ENCODE measurements at regions of chr15 and their contacts with region 1.

Region 1: GRCh38 chr15:41989259-41989933 is 17.0 kb upstream of the EHD4 start:
- DNase-seq: peak; percentile 81 to 88 (median 85)
- ATAC-seq: peak; percentile 91 to 97 (median 96)
- H3K4me3 ChIP-seq: no peak overlapping the region
- H3K27ac ChIP-seq: no peak overlapping the region
- H3K4me1 ChIP-seq: no peaks in the 10 kb centered on the region
- H3K27me3 ChIP-seq: no peaks in the 10 kb centered on the region
- CTCF ChIP-seq: peak; percentile 97 to 99 (median 98)
- POLR2A ChIP-seq: no peak

Region 2: DNA sequence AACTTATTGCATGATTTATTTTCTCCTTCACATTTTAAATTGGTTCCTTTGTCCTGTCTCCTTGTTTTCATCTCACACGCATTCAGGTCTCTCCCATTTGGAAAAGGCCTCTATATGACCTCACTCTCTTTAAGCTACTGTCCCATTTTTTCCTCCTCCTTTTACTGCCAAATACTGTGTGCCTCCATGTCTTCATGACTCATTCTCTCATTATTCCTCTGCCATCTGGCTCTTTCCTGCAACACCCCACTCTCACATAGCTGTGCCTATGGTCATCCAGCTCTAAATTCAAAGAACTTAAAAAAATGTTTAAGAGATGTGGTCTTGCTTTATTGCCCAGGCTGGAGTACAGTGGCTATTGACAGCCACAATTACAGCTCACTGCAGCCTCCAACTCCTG is 382.4 kb before region 1 on chr15:
- intact Hi-C with region 1: no loop called
- DNase-seq: no peak
- ATAC-seq: no peak
- H3K4me3 ChIP-seq: no peak overlapping the region
- H3K27ac ChIP-seq: no peak overlapping the region
- H3K4me1 ChIP-seq: no peaks in the 10 kb centered on the region
- H3K27me3 ChIP-seq: no peaks in the 10 kb centered on the region
- CTCF ChIP-seq: no peak
- POLR2A ChIP-seq: no peak

Region 3: GRCh38 chr15:42056934-42057779 is 67.8 kb after region 1 on chr15:
- intact Hi-C with region 1: loop called in 1 of 2 experiments (anchors 5 kb)
- DNase-seq: peak; percentile 64 to 83 (median 74)
- ATAC-seq: peak; percentile 70 to 83 (median 77)
- H3K4me3 ChIP-seq: peak overlapping the region in 1 of 3 donors; percentile 14
- H3K27ac ChIP-seq: peak overlapping the region in 2 of 3 donors; percentile 33 to 36
- H3K4me1 ChIP-seq: peaks cover 0 to 25% (median 0%) of the 10 kb centered on the region in 4 donors
- H3K27me3 ChIP-seq: no peaks in the 10 kb centered on the region
- CTCF ChIP-seq: peak; percentile 36 to 67 (median 50)
- POLR2A ChIP-seq: no peak

Region 4: DNA sequence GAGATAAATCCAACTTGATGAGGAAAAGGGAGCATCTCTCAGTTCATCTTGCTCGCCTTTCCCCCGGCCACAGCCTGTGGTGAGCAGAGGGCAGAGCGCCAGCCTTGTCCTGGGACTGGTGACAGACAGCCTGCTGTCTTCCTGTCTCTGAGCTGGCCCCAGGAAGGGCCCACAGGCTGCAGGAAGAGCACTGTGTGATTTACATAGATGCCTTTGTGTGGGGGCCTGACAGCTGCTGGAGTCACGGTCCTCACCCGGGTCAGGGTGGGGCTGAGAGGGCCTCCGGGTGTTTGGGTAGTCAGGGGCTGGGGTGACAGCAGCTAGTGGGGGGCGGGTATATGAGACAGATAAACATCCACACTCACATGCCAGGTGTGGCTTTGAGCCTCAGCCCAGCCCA is 75.6 kb after region 1 on chr15:
- intact Hi-C with region 1: loop called in 1 of 2 experiments (anchors 5 kb)
- DNase-seq: peak in 1 of 3 donors; percentile 60
- ATAC-seq: peak in 3 of 4 donors; percentile 7 to 11 (median 10)
- H3K4me3 ChIP-seq: no peak overlapping the region
- H3K27ac ChIP-seq: no peak overlapping the region
- H3K4me1 ChIP-seq: peaks cover 0 to 12% (median 0%) of the 10 kb centered on the region in 4 donors
- H3K27me3 ChIP-seq: no peaks in the 10 kb centered on the region
- CTCF ChIP-seq: no peak
- POLR2A ChIP-seq: no peak

Region 5: DNA sequence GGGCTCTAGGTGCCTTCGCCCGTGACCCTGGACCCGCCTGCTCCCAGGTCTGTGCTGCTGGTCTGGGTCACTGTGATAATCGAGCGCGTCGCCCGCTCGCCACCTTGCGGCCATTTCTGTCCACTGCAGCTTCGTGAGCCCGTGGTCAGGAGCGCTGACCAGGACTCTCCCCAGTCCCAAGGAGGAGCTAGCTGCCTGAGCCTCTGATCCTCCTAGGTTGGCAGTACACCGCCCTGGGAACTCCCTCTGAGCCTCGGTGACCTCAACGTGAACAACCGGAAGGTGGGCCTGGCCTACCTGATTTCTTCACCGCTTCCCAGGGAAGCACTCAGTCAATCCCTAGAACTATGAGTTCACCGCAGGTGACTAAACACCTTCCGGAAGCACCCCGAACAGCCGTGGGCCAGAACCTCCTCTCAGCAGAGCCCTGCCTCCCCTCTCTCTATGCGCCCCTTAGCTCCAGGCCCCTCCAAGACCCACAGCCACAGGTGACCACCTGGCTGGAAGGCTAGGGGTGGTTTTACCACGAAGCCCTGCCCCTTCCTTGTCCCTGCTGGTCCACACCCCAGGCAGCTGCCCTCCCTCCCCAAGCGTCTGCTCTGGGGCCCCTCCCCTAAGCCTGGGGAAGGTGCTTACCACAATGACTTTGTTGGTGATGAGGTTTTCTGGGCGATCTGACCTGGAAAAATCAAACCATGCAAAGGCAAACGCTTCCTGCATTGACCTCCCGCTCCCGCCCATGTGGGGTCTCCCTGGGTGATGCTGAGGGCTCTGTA is 95.3 kb after region 1 on chr15:
- intact Hi-C with region 1: loop called in 1 of 2 experiments (anchors 10 kb)
- DNase-seq: peak; percentile 69 to 76 (median 74)
- ATAC-seq: peak; percentile 88 to 97 (median 95)
- H3K4me3 ChIP-seq: no peak overlapping the region
- H3K27ac ChIP-seq: no peak overlapping the region
- H3K4me1 ChIP-seq: no peaks in the 10 kb centered on the region
- H3K27me3 ChIP-seq: no peaks in the 10 kb centered on the region
- CTCF ChIP-seq: peak; percentile 91 to 97 (median 94)
- POLR2A ChIP-seq: no peak

Region 6: DNA sequence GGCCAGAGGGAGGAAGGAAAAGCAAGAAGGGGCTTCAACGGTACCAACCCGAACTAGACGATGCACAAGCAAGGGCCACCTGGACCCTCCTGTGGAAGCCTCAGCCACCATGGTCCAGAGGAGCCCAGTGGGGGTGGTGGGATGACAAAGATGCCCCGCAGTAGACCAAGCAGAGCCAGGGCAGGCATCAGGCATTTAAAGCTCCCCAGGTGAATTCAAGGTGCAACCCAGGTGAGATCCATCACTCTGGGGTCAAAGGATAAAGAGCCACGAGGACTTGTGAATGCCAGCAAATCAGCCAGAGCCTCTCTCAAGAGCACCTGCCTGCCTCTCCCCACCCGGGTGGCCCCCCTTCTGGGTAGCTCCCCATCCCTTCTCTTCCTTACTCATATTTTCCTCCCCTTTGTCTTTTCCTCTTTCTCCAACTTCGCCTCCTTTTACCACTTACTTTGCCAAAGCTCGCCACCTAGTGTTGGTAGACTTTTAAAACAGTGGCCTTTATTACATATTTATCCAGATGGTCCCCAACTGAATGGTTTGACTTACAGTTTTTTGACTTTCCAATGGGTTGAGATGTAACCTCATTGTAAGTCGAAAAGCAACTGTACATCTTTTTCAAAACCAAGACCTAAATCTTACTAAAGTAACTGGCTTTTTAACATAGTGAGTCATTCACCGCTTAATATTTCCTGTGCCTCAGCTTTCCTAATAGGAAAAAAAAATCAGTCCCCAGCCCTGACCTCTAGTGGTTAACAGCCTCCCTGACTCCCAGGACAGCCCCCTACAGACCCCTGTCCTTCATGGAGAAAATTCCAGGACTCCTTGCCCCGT is 148.2 kb after region 1 on chr15:
- intact Hi-C with region 1: no loop called
- DNase-seq: peak in 1 of 3 donors; percentile 35
- ATAC-seq: peak in 3 of 4 donors; percentile 26 to 45 (median 37)
- H3K4me3 ChIP-seq: no peak overlapping the region
- H3K27ac ChIP-seq: no peak overlapping the region
- H3K4me1 ChIP-seq: no peaks in the 10 kb centered on the region
- H3K27me3 ChIP-seq: no peaks in the 10 kb centered on the region
- CTCF ChIP-seq: peak; percentile 28 to 48 (median 40)
- POLR2A ChIP-seq: no peak